HCT116 (cell line): ENCODE measurements at regions of chr11 and their contacts with region 1.

Region 1: GRCh38 chr11:125164422-125165110 is at the start of gene PKNOX2:
- DNase-seq: peak; percentile 3
- ATAC-seq: peak; percentile 89
- H3K4me3 ChIP-seq: peak within 1 kb of the TSS in 1 of 2 experiments; percentile 11; a peak in 1 of 4 replicates
- H3K27ac ChIP-seq: no peak within 1 kb of the TSS
- H3K4me1 ChIP-seq: no peaks in the 10 kb centered on the region
- H3K27me3 ChIP-seq: no peaks in the 10 kb centered on the region
- CTCF ChIP-seq: peak; percentile 18 to 42 (median 26); a peak in 4 of 6 replicates
- POLR2A ChIP-seq: no peak
- RAD21 ChIP-seq: no peak
- total RNA-seq, gene PKNOX2: 0.20 TPM

Region 2: GRCh38 chr11:125180413-125181305 is 16.1 kb after region 1 on chr11:
- CTCF ChIA-PET with region 1: no interaction called
- POLR2A ChIA-PET with region 1: no interaction called
- RAD21 ChIA-PET with region 1: no interaction called
- intact Hi-C with region 1: no loop called
- DNase-seq: no peak
- ATAC-seq: no peak
- H3K4me3 ChIP-seq: no peak overlapping the region
- H3K27ac ChIP-seq: no peak overlapping the region
- H3K4me1 ChIP-seq: no peaks in the 10 kb centered on the region
- H3K27me3 ChIP-seq: peaks cover 35% of the 10 kb centered on the region; the same call in 1 of the 2 replicates
- CTCF ChIP-seq: no peak
- POLR2A ChIP-seq: no peak
- RAD21 ChIP-seq: no peak

Region 3: DNA sequence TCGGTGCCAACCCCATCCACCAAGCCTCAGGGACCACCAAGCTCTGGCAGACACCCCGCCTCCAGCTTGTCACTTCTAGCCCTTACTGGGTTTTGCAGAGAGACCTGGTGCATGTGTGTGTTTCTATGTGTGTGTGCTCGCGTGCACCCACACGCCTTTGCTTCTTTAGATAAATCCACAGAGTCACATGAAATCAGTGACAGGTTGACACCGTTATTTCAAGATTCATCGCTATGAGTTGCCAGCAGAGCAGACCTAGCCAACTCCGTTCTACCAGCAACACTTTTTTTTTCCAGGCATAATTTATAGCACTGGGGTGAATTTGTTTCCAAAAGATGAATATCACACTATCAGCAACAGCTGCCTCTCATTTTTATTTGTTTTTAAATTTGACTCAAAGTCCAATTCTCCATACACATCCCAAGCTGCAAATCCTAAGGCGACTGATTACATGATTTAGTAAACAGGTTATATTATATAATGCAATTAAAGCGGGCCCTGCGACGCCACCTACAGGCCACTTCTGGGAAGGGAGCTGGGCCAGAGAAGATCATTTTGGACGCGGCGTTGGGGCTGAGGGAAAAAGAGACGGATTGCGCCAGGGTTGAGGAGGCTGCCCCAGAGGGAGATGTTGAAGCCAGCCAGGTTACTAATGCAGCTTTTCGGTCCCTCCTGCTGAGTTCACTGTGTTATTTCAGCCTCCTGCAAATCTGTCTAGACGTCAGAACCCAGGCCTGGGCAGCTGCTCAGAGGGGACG is 181.0 kb after region 1 on chr11:
- CTCF ChIA-PET with region 1: no interaction called
- POLR2A ChIA-PET with region 1: no interaction called
- RAD21 ChIA-PET with region 1: no interaction called
- intact Hi-C with region 1: loop called (anchors 5 kb)
- DNase-seq: no peak
- ATAC-seq: peak; percentile 84
- H3K4me3 ChIP-seq: no peak overlapping the region
- H3K27ac ChIP-seq: no peak overlapping the region
- H3K4me1 ChIP-seq: peaks cover 0 to 2% of the 10 kb centered on the region in 2 experiments; a peak in 1 of 4 replicates
- H3K27me3 ChIP-seq: no peaks in the 10 kb centered on the region
- CTCF ChIP-seq: peak; percentile 83 to 92 (median 91)
- POLR2A ChIP-seq: no peak
- RAD21 ChIP-seq: peak; percentile 72